HepG2 (cell line): ENCODE measurements at regions of chr6 and their contacts with region 1.

Region 1: DNA sequence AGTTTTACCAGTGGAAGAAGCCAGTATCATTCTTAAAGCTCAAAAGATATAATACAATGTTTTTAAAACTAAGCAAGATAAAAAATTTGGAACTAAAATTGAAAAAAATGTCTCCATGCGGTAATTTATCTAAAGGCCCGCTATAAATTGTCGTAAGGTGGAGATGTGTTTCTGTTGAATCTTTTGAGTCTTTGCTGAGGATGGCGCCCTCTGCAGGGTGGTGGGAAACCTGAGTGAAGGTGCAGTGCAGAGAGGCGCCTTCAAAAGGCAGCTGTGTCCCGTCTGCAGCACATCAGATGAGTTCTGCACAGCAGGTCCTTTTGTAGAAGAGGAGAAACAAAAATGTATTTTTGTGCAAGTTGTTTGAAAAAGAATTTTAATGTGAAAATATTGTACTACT is 29.4 kb upstream of the KIF25 start:
- DNase-seq: peak; percentile 65
- ATAC-seq: peak; percentile 42
- H3K4me3 ChIP-seq: no peak overlapping the region
- H3K27ac ChIP-seq: no peak overlapping the region
- H3K4me1 ChIP-seq: peaks cover 38% of the 10 kb centered on the region
- H3K27me3 ChIP-seq: no peaks in the 10 kb centered on the region
- CTCF ChIP-seq: peak; percentile 71
- EP300 ChIP-seq: no peak
- POLR2A ChIP-seq: no peak
- RAD21 ChIP-seq: peak; percentile 36; the same call in 1 of the 2 replicates

Region 2: DNA sequence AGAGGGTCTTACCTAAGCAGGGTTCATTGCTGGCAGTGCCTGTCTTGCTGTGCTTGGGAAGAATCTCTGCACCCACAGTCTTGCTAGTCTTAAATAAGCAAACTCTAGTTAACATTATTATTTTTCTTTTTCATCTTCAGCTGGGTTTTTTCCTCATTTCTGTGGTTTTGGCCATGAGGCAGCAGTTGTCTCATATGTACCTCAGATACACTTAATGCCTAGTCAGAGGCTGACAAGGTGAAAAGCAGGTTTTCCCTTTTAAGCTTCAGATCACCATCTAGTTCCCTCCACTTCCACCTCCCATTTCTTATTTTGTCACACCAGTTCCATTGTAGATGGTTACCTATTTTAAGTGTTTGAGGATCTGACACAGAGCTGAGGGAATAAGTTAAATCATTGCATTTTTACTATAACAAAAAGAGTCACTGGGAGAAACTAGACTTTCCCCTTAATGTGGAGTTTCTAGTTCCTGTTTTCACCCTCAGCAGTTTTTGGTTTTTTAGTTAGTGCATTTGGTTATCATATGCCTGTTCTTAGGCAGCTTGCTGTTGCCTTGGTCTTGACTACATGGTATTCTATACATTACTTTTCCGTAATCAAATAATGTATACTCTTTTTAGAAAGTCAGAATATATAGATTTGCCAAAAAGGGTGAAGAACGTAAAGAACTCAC is 95.4 kb before region 1 on chr6:
- CTCF ChIA-PET with region 1: no interaction called
- POLR2A ChIA-PET with region 1: no interaction called
- in situ Hi-C with region 1: no loop called
- intact Hi-C with region 1: no loop called
- DNase-seq: no peak
- ATAC-seq: no peak
- H3K4me3 ChIP-seq: no peak overlapping the region
- H3K27ac ChIP-seq: no peak overlapping the region
- H3K4me1 ChIP-seq: peaks cover 12% of the 10 kb centered on the region
- H3K27me3 ChIP-seq: no peaks in the 10 kb centered on the region
- CTCF ChIP-seq: no peak
- EP300 ChIP-seq: no peak
- POLR2A ChIP-seq: no peak
- RAD21 ChIP-seq: no peak

Region 3: GRCh38 chr6:167907837-167908681 is 60.0 kb before region 1 on chr6:
- CTCF ChIA-PET with region 1: interaction called, 9 read pairs
- POLR2A ChIA-PET with region 1: no interaction called
- in situ Hi-C with region 1: no loop called
- intact Hi-C with region 1: loop called (anchors 2 kb)
- DNase-seq: peak; percentile 51
- ATAC-seq: peak; percentile 86
- H3K4me3 ChIP-seq: no peak overlapping the region
- H3K27ac ChIP-seq: no peak overlapping the region
- H3K4me1 ChIP-seq: peaks cover 3% of the 10 kb centered on the region; the same call in 1 of the 2 replicates
- H3K27me3 ChIP-seq: no peaks in the 10 kb centered on the region
- CTCF ChIP-seq: peak; percentile 69
- EP300 ChIP-seq: no peak
- POLR2A ChIP-seq: no peak
- RAD21 ChIP-seq: 0 out of 2 replicates have a peak, but pooled peaks have one; percentile 28

Region 4: GRCh38 chr6:167932468-167933276 is 35.4 kb before region 1 on chr6:
- CTCF ChIA-PET with region 1: no interaction called
- POLR2A ChIA-PET with region 1: interaction called, 22 read pairs
- in situ Hi-C with region 1: no loop called
- intact Hi-C with region 1: loop called (anchors 2 kb)
- DNase-seq: peak; percentile 88
- ATAC-seq: peak; percentile 82
- H3K4me3 ChIP-seq: peak overlapping the region; percentile 26 to 50 (median 48); a peak in 4 of 6 replicates
- H3K27ac ChIP-seq: peak overlapping the region; percentile 77
- H3K4me1 ChIP-seq: peaks cover 61% of the 10 kb centered on the region
- H3K27me3 ChIP-seq: no peaks in the 10 kb centered on the region
- CTCF ChIP-seq: no peak
- EP300 ChIP-seq: peak in 1 of 2 experiments; percentile 31; a peak in 2 of 4 replicates
- POLR2A ChIP-seq: peak; percentile 39 to 55; a peak in 2 of 4 replicates
- RAD21 ChIP-seq: no peak